Activated T-helper 1 cell treated with anti-CD3 and anti-CD28 coated beads, Interleukin-12 subunit alpha, Interleukin-12 subunit beta, Interleukin-2, Interleukin-4 antibody, amounts not matched to agents 30 ng/mL and 10 ng/mL and 1 ng/mL, durations not matched to agents 14 hours and 24 hours and 36 hours (primary cell): ENCODE measurements at regions of chr18 and their contacts with region 1.

Region 1: DNA sequence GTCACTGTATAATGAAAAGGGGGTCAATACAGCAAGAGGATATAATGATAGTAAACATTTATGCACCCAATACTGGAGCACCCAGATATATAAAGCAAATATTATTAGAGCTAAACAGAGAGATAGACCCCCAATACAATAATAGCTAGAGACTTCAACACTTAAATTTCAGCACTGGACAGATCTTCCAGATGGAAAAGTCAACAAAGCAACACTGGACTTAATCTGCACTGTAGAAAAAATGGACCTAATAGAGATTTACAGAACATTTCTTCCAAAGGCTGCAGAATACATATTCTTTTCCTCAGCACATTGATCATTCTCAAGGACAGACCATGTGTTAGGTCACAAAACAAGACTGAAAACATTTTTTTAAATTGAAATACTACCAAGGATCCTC is 26.7 kb downstream of the ZBTB14 start:
- DNase-seq: no peak
- H3K4me3 Mint-ChIP-seq: no peak overlapping the region
- H3K27ac Mint-ChIP-seq: no peak overlapping the region
- H3K4me1 Mint-ChIP-seq: no peaks in the 10 kb centered on the region
- H3K27me3 Mint-ChIP-seq: peaks cover 8% of the 10 kb centered on the region

Region 2: GRCh38 chr18:3879788-3880120 is 1389.1 kb before region 1 on chr18:
- intact Hi-C with region 1: loop called (anchors 5 kb)
- DNase-seq: no peak
- H3K4me3 Mint-ChIP-seq: no peak overlapping the region
- H3K27ac Mint-ChIP-seq: no peak overlapping the region
- H3K4me1 Mint-ChIP-seq: no peaks in the 10 kb centered on the region
- H3K27me3 Mint-ChIP-seq: peaks cover 8% of the 10 kb centered on the region

Region 3: GRCh38 chr18:5295981-5296705 is 27.3 kb after region 1 on chr18:
- intact Hi-C with region 1: no loop called
- DNase-seq: peak; percentile 91
- H3K4me3 Mint-ChIP-seq: peak overlapping the region; percentile 94
- H3K27ac Mint-ChIP-seq: peak overlapping the region; percentile 98
- H3K4me1 Mint-ChIP-seq: peaks cover 34% of the 10 kb centered on the region
- H3K27me3 Mint-ChIP-seq: peaks cover 16% of the 10 kb centered on the region